ENCODE measurements at regions of chr12 and their contacts with region 1.

Region 1: DNA sequence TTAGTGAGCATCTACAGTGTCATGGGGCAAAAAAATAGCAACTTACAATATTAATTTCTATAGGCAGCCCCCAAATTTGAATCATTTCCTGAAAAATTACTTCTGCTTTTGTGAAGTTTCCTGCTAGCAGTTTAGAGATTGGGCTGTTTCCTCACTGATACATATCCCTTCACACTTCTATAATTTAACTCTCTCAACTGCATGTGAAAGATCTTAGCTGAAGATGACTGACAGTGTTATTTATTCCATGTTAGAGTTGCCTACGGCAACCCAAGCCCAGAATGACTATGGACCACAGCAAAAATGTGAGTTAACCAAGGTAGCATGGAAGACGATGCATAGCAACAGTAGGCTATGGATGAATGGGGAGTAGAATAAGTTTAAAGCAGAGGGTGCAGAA is at the start of gene KLRG1:
- DNase-seq: no peak
- ATAC-seq: no peak
- H3K4me3 ChIP-seq: no peak within 1 kb of the TSS
- H3K27ac ChIP-seq: no peak within 1 kb of the TSS
- H3K4me1 ChIP-seq: no peaks in the 10 kb centered on the region
- H3K27me3 ChIP-seq: peaks cover 7% of the 10 kb centered on the region; the same call in 1 of the 2 replicates
- CTCF ChIP-seq: no peak
- total RNA-seq, gene KLRG1: 0.15 TPM in 1 of 2 replicates, not detected in the other

Region 2: GRCh38 chr12:8950221-8950527 is 39.2 kb before region 1 on chr12:
- CTCF ChIA-PET with region 1: no interaction called
- POLR2A ChIA-PET with region 1: no interaction called
- intact Hi-C with region 1: no loop called
- DNase-seq: no peak
- ATAC-seq: peak; percentile 8; the same call in 1 of the 2 replicates
- H3K4me3 ChIP-seq: peak overlapping the region; percentile 85
- H3K27ac ChIP-seq: no peak overlapping the region
- H3K4me1 ChIP-seq: peaks cover 7% of the 10 kb centered on the region
- H3K27me3 ChIP-seq: no peaks in the 10 kb centered on the region
- CTCF ChIP-seq: no peak

Region 3: GRCh38 chr12:9024512-9024911 is 35.1 kb after region 1 on chr12:
- CTCF ChIA-PET with region 1: no interaction called
- POLR2A ChIA-PET with region 1: interaction called, 12 read pairs
- intact Hi-C with region 1: no loop called
- DNase-seq: no peak
- ATAC-seq: no peak
- H3K4me3 ChIP-seq: no peak overlapping the region
- H3K27ac ChIP-seq: no peak overlapping the region
- H3K4me1 ChIP-seq: no peaks in the 10 kb centered on the region
- H3K27me3 ChIP-seq: peaks cover 4% of the 10 kb centered on the region; the same call in 1 of the 2 replicates
- CTCF ChIP-seq: no peak